B cell (primary cell): ENCODE measurements at regions of chr3 and their contacts with region 1.

Region 1: DNA sequence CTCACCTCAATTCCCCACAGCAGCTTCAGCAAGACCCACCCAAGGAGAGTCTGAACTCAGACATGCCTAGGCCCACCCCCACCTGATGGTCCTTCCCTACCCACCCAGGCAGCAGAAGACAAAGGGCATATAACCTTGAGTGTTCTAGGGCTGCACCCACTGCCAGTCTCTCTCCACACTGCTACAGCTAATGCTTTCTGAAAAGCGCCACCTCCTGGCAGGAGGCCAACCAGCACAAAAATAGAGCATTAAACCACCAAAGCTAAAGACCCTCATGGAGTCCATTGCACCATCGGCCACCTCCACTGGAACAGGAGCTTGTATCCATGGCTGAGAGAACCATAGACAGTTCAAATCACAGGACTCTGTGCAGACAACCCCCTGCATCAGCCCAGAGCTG is 11.3 kb upstream of the RPL39L start:
- DNase-seq: peak; percentile 70
- ATAC-seq: peak; percentile 70
- H3K4me3 ChIP-seq: no peak overlapping the region
- H3K4me3 Mint-ChIP-seq: no peak overlapping the region
- H3K27ac ChIP-seq: no peak overlapping the region
- H3K27ac Mint-ChIP-seq: no peak overlapping the region
- H3K4me1 ChIP-seq: no peaks in the 10 kb centered on the region
- H3K4me1 Mint-ChIP-seq: peaks cover 3% of the 10 kb centered on the region
- H3K27me3 ChIP-seq: no peaks in the 10 kb centered on the region
- H3K27me3 Mint-ChIP-seq: peaks cover 6% of the 10 kb centered on the region
- CTCF ChIP-seq: peak; percentile 75

Region 2: DNA sequence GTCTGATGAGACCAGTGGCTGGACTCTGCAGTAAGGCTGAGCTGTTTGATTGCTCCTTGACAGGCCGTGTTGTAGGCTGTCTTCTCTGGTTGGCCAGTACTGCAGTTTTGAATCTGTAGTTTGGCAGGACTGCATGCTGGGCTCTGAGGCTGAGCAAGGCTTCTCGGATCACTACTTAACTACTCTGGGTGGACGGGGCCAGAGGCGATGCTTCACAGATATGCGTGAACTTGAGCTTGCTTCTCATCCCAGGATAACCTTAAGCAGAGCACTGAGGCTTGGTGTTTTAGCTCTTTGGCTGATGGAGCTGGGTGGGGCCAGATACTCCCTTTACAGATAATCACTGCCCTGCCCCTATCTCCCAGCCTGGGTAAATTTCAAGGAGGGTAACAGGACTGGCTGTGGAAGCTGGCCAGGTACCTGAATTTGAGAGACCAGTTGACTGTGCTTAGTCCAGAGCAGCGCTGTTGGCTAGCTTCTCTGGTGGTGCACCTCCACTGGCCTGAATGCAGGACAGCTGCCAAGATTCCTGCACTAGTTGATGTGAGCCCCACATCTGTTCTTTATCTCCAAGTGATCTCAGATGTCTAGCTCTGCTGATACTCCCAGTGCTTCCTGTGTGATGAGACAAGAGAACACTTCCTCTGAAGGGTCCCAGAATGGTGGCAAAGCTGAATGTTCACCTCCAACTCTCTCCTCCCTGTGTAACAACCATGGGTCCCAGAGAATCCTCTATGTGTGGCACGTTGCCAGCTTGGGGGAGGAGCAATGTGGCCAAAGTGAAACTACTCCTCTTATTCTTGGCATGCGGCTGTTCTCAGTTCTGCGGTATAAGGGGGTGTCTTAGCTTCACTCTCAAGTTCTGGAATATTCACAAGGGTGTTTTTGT is 49.2 kb before region 1 on chr3:
- CTCF ChIA-PET with region 1: interaction called, 22 read pairs
- POLR2A ChIA-PET with region 1: no interaction called
- intact Hi-C with region 1: no loop called
- DNase-seq: peak; percentile 51
- ATAC-seq: peak; percentile 45
- H3K4me3 ChIP-seq: peak overlapping the region in 4 of 5 experiments; percentile 3 to 46 (median 24)
- H3K4me3 Mint-ChIP-seq: peak overlapping the region; percentile 74
- H3K27ac ChIP-seq: peak overlapping the region in 1 of 2 donors; percentile 14
- H3K27ac Mint-ChIP-seq: peak overlapping the region; percentile 26
- H3K4me1 ChIP-seq: peaks cover 10 to 11% of the 10 kb centered on the region in 2 donors
- H3K4me1 Mint-ChIP-seq: peaks cover 30% of the 10 kb centered on the region
- H3K27me3 ChIP-seq: no peaks in the 10 kb centered on the region
- H3K27me3 Mint-ChIP-seq: no peaks in the 10 kb centered on the region
- CTCF ChIP-seq: no peak

Region 3: DNA sequence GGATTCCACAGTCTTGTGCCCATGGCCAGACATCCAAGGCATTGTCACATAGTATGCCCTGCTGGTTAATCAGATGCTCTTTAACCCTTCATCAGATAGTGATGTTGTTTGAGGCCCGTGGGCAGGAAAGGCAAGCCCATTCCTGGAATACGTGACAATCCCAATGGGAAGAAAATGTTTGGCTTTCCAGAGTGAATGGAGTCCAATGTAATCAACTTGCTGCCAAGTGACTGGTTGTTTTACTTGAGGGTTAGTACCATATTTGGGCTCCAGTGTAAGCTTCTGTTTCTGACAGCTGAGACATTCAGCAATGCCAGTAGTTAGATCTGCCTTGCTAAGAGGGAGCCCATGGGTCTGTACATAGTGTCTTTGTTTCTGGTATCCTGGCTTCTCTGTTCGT is 42.6 kb before region 1 on chr3:
- CTCF ChIA-PET with region 1: interaction called, 196 read pairs
- POLR2A ChIA-PET with region 1: interaction called, 3 read pairs
- intact Hi-C with region 1: loop called (anchors 1 kb)
- DNase-seq: no peak
- ATAC-seq: no peak
- H3K4me3 ChIP-seq: no peak overlapping the region
- H3K4me3 Mint-ChIP-seq: no peak overlapping the region
- H3K27ac ChIP-seq: no peak overlapping the region
- H3K27ac Mint-ChIP-seq: no peak overlapping the region
- H3K4me1 ChIP-seq: peaks cover 2 to 3% of the 10 kb centered on the region in 2 donors
- H3K4me1 Mint-ChIP-seq: peaks cover 3% of the 10 kb centered on the region
- H3K27me3 ChIP-seq: no peaks in the 10 kb centered on the region
- H3K27me3 Mint-ChIP-seq: no peaks in the 10 kb centered on the region
- CTCF ChIP-seq: no peak

Region 4: GRCh38 chr3:187120326-187120725 is 30.3 kb before region 1 on chr3:
- CTCF ChIA-PET with region 1: interaction called, 196 read pairs
- POLR2A ChIA-PET with region 1: no interaction called
- intact Hi-C with region 1: no loop called
- DNase-seq: no peak
- ATAC-seq: no peak
- H3K4me3 ChIP-seq: no peak overlapping the region
- H3K4me3 Mint-ChIP-seq: no peak overlapping the region
- H3K27ac ChIP-seq: no peak overlapping the region
- H3K27ac Mint-ChIP-seq: no peak overlapping the region
- H3K4me1 ChIP-seq: peaks cover 9 to 13% of the 10 kb centered on the region in 2 donors
- H3K4me1 Mint-ChIP-seq: peaks cover 19% of the 10 kb centered on the region
- H3K27me3 ChIP-seq: no peaks in the 10 kb centered on the region
- H3K27me3 Mint-ChIP-seq: no peaks in the 10 kb centered on the region
- CTCF ChIP-seq: no peak

Region 5: GRCh38 chr3:187130346-187131066 is 20.1 kb before region 1 on chr3:
- CTCF ChIA-PET with region 1: interaction called, 17 read pairs
- POLR2A ChIA-PET with region 1: interaction called, 3 read pairs
- intact Hi-C with region 1: no loop called
- DNase-seq: peak; percentile 84
- ATAC-seq: peak; percentile 92
- H3K4me3 ChIP-seq: peak overlapping the region in 1 of 5 experiments; percentile 28
- H3K4me3 Mint-ChIP-seq: peak overlapping the region; percentile 70
- H3K27ac ChIP-seq: peak overlapping the region; percentile 84 to 90
- H3K27ac Mint-ChIP-seq: peak overlapping the region; percentile 88
- H3K4me1 ChIP-seq: peaks cover 31 to 35% of the 10 kb centered on the region in 2 donors
- H3K4me1 Mint-ChIP-seq: peaks cover 46% of the 10 kb centered on the region
- H3K27me3 ChIP-seq: no peaks in the 10 kb centered on the region
- H3K27me3 Mint-ChIP-seq: no peaks in the 10 kb centered on the region
- CTCF ChIP-seq: no peak

Region 6: DNA sequence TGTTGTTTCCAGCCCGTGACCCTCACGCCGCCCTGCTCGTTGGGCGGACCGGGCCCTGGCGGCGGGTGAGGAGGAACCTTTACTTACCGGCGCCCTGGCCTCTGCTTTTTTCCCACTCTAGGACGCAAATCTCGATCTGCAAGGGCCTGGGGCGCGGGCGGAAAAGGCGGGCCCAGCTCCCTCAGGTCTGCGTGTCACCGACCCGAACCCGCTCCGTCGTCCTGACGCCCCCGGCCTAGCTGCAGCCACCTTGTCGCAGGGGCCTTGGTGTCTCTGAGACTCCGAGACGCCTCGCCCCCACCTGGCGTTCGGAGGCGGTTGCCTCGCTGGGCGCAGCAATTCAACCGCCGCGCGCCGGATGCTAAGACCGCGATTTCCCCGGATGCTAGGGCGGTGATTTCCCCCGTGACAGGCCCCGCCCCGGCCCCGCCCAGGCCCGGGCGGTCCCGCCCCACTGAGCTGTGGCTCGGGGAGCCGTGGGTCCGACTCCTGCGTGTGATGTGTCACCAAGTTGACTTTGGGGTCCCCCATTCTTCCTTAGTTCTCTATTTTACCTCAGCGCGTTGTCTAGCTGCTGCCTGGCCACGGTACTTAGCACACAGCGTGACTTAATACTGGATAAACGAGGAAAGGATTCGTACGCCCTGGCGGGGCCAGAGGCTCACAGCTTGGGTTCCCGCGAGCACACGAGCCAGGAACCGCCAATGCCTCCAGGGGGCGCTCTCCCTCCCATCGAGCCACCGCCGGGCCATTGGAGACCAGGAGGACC is 11.3 kb before region 1 on chr3 and contains the start of gene RPL39L:
- CTCF ChIA-PET with region 1: interaction called, 62 read pairs
- POLR2A ChIA-PET with region 1: interaction called, 11 read pairs
- intact Hi-C with region 1: no loop called
- DNase-seq: peak; percentile 95
- ATAC-seq: peak; percentile 95
- H3K4me3 ChIP-seq: peak within 1 kb of the TSS in 4 of 5 experiments; percentile 49 to 68 (median 58)
- H3K4me3 Mint-ChIP-seq: peak within 1 kb of the TSS; percentile 90
- H3K27ac ChIP-seq: peak within 1 kb of the TSS; percentile 77 to 79
- H3K27ac Mint-ChIP-seq: peak within 1 kb of the TSS; percentile 90
- H3K4me1 ChIP-seq: peaks cover 12 to 14% of the 10 kb centered on the region in 2 donors
- H3K4me1 Mint-ChIP-seq: peaks cover 16% of the 10 kb centered on the region
- H3K27me3 ChIP-seq: no peaks in the 10 kb centered on the region
- H3K27me3 Mint-ChIP-seq: no peaks in the 10 kb centered on the region
- CTCF ChIP-seq: peak; percentile 79
- total RNA-seq, gene RPL39L: 2.0 and 3.1 TPM in 2 replicates

Region 7: DNA sequence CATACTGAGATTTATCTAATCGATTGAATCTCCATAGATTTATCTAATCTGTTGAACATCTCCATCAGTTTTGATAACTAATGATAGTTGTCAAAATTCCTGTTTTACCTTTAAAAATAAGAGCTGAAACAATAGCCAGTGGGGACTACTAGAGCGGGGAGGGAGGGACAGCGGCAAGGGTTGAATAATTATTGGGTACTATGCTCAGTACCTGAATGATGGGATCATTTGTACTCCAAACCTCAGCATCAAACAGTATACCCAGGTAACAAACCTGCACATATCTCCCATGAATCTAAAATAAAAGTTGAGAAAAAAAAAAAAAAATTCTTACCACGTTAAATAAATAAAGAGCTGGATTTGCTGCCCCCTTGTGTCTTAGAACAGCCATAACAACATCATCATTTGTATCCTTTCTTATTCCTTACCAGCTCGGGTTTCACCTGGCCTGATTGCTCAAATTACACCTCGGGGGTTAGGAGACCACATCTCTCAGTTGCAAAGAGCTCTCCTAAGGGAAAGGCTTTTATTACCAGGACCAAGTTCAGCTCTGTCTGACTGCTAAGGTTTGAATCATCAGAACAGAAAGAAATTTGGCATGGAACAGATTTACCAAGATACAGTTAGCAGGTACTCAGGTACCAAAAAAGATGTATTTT is 14.4 kb after region 1 on chr3:
- CTCF ChIA-PET with region 1: interaction called, 49 read pairs
- POLR2A ChIA-PET with region 1: no interaction called
- intact Hi-C with region 1: no loop called
- DNase-seq: peak; percentile 81
- ATAC-seq: peak; percentile 72
- H3K4me3 ChIP-seq: no peak overlapping the region
- H3K4me3 Mint-ChIP-seq: no peak overlapping the region
- H3K27ac ChIP-seq: no peak overlapping the region
- H3K27ac Mint-ChIP-seq: no peak overlapping the region
- H3K4me1 ChIP-seq: no peaks in the 10 kb centered on the region
- H3K4me1 Mint-ChIP-seq: no peaks in the 10 kb centered on the region
- H3K27me3 ChIP-seq: peaks cover 0 to 6% (median 0%) of the 10 kb centered on the region in 4 experiments
- H3K27me3 Mint-ChIP-seq: peaks cover 23% of the 10 kb centered on the region
- CTCF ChIP-seq: peak; percentile 81